Activated CD8-positive, alpha-beta T cell treated with anti-CD3 and anti-CD28 coated beads for 36 hours (primary cell): ENCODE measurements at regions of chr1 and their contacts with region 1.

Region 1: DNA sequence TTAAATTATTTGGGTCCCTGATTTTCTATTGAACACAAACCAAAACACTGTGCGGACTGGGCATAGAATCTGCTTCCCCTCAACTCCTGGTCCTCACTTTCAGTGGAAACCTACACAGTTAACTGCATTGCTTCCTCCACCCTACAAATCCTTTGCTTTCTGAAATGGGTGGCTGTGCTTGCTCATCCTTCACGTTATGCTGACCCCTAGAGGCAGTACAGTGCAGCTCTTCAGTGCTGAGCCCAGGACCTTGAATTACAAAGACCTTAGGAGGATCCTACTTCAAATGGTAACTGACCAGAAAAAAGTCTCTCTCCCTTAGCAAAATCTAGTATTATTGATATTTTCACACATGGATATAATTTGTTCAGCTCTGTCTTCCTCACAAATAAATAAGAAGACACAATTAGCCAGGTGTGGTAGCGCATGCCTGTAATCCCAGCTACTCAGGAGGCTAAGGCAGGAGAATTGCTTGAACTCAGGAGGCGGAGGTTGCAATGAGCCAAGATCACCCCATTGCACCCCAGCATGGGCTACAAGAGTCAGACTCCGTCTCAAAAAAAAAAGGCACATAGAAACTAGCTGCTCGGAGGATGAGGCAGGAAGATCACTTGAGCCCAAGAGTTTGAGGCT is 63.4 kb upstream of the L1TD1 start:
- DNase-seq: peak; percentile 53
- ATAC-seq: peak; percentile 67
- H3K4me3 Mint-ChIP-seq: no peak overlapping the region
- H3K27ac Mint-ChIP-seq: no peak overlapping the region
- H3K4me1 Mint-ChIP-seq: no peaks in the 10 kb centered on the region
- H3K27me3 Mint-ChIP-seq: no peaks in the 10 kb centered on the region
- CTCF ChIP-seq: peak; percentile 80

Region 2: GRCh38 chr1:62117018-62117750 is 14.0 kb before region 1 on chr1:
- CTCF ChIA-PET with region 1: interaction called, 11 read pairs
- POLR2A ChIA-PET with region 1: no interaction called
- intact Hi-C with region 1: no loop called
- DNase-seq: no peak
- ATAC-seq: no peak
- H3K4me3 Mint-ChIP-seq: no peak overlapping the region
- H3K27ac Mint-ChIP-seq: no peak overlapping the region
- H3K4me1 Mint-ChIP-seq: no peaks in the 10 kb centered on the region
- H3K27me3 Mint-ChIP-seq: no peaks in the 10 kb centered on the region
- CTCF ChIP-seq: no peak

Region 3: DNA sequence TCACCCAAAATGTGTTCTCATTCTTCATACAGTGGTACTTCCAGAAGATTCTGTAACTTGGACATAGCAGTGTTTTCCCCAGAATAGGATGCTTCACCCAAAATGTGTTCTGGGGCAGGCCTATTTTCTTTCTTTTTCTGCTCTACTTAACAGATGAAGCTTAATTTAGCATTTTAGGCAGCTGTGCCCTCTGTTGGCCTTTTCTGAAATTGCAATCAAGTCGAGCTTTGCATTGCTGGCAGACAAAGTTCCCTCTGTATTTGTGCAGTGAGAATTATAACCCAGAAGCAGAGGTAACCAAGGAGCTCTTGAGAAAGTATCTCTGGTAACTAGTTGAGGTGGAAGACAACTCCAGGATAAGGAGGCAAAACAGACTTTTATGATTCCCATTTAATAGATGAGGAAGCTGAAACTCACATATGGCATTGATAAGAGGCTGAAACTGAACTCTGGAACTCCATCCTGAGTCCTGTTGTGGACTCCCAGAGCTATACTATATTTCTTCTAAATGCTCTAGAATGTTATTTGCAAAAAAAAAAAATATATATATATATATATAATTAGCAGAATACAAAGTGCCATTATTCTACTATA is 13.1 kb after region 1 on chr1:
- CTCF ChIA-PET with region 1: interaction called, 20 read pairs
- POLR2A ChIA-PET with region 1: no interaction called
- intact Hi-C with region 1: no loop called
- DNase-seq: peak; percentile 61
- ATAC-seq: peak; percentile 34
- H3K4me3 Mint-ChIP-seq: no peak overlapping the region
- H3K27ac Mint-ChIP-seq: no peak overlapping the region
- H3K4me1 Mint-ChIP-seq: no peaks in the 10 kb centered on the region
- H3K27me3 Mint-ChIP-seq: no peaks in the 10 kb centered on the region
- CTCF ChIP-seq: peak; percentile 68